ENCODE measurements at regions of chr18 and their contacts with region 1.

Region 1: GRCh38 chr18:22348521-22349316 is 69.0 kb downstream of the CTAGE1 start:
- DNase-seq: peak; percentile 73 to 85
- ATAC-seq: peak; percentile 77
- H3K4me3 ChIP-seq: peak overlapping the region; percentile 48 to 72
- H3K27ac ChIP-seq: peak overlapping the region; percentile 99
- H3K4me1 ChIP-seq: peaks cover 0 to 2% of the 10 kb centered on the region in 2 donors
- H3K27me3 ChIP-seq: no peaks in the 10 kb centered on the region

Region 2: DNA sequence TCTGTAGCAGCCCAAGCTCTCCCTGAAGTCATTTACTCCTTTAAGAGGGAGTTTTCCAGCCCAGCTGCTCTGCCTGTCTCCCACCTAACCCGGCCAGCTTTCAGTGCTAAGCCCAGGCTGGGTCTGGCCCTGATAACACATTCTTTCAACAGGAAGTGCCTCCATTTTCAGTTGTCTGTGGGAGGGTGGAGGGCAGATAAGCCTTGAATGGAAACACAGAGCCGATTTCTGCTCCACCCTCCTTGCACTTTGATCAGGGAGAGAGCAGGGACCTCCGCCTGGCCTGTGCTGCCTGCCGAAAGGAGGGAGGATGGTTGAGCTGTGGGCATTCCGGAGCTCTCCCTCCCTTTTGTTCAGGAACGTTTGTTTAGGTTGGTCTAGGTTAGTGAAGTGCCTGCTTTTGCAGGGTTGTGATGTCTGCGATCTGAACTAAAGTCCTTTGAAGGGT is 154.5 kb before region 1 on chr18:
- intact Hi-C with region 1: loop called (anchors 5 kb)
- DNase-seq: no peak
- ATAC-seq: no peak
- H3K4me3 ChIP-seq: no peak overlapping the region
- H3K27ac ChIP-seq: peak overlapping the region; percentile 62 to 72
- H3K4me1 ChIP-seq: peaks cover 4 to 11% of the 10 kb centered on the region in 2 donors
- H3K27me3 ChIP-seq: no peaks in the 10 kb centered on the region

Region 3: DNA sequence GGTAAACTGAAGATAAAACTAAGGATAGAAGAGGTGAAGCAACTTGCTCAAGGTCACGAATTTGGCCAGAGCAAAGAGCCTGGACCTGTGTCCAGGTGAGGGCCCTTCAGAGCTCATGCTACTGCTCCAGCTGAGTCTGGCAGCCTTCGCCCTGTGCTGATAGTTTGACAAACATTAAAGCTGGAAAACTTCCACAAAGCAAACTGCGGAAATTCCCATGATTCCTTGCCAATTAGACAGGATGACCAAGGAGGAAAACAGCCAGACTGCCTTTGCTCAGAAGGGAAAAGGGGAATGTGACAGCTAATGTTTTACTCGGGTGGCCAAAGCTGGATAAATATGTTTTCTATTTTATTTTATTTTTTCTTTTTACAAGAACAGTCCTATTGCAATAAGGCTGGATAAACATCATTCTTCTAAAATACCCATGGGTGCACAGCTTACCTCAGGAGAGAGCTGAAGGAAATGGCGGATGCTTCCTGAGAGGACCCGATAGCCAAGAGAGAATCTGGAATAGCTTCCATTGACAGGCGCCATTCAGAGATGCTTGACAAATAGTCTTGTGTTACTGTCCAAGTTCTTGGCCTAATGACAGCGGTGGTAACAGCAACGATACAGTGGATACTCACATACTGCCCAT is 74.3 kb after region 1 on chr18:
- intact Hi-C with region 1: loop called in 1 of 2 experiments (anchors 5 kb)
- DNase-seq: peak in 1 of 2 donors; percentile 64
- ATAC-seq: peak; percentile 17
- H3K4me3 ChIP-seq: no peak overlapping the region
- H3K27ac ChIP-seq: peak overlapping the region in 1 of 2 donors; percentile 89
- H3K4me1 ChIP-seq: peaks cover 0 to 7% of the 10 kb centered on the region in 2 donors
- H3K27me3 ChIP-seq: no peaks in the 10 kb centered on the region

Region 4: DNA sequence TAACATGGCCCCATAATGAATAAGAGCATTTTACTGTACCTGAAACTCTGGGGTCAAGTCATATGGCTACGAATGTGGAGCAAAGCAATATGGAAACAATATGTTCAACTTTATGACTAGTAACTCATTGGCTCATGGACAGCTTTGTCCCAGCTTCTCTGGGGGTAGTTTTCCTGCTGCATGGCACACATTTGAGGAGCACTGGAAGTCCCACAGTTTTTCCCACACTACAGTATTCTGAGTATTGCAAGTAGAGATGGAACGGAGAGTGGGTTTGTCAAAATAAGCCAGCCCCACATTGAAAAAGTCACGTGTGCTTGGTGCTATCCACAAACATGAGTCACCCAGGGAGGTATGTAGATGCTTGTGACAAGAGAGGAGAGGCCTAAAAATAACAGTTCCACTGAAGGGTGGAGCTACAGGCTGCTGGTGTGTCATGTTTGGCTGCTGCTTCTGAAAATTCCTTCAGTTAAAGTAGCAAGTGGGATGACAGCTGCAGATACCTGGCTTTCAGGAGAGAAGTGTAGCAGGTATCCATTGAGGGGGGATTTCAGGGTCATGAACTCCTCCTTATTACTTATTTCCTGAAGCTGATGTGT is 117.2 kb after region 1 on chr18:
- intact Hi-C with region 1: loop called (anchors 2 to 5 kb)
- DNase-seq: peak in 1 of 2 donors; percentile 65
- ATAC-seq: peak; percentile 89
- H3K4me3 ChIP-seq: no peak overlapping the region
- H3K27ac ChIP-seq: peak overlapping the region; percentile 72 to 100
- H3K4me1 ChIP-seq: peaks cover 4 to 8% of the 10 kb centered on the region in 2 donors
- H3K27me3 ChIP-seq: no peaks in the 10 kb centered on the region

Region 5: DNA sequence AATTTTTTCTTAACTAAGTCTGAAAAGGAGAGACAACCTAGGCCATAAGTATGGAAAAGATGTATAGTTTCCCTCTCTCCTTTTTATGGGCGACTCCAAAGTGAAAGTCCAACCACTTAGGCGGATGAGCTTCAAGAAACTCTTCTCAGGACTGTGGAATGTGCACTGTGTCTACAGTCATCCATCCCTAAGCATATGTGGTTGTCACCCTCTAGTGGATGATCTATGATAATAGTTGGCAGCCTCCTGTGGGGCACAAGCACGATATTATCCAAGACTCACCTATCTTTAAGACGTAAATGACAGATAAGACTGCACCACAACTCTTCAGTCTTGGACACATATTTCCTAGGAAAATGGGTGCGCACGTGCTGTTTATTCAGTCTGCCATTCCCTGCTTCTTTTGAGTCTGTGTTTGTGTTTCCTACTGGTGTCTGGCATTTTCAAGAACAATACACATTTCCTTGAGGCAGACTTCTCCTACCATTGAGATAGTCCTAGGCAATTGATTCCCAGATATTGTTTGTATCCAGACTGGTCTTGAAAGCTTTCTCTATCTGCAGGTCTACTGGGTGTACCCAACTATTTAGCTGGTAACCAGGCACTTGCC is 214.5 kb after region 1 on chr18:
- intact Hi-C with region 1: loop called (anchors 2 to 5 kb)
- DNase-seq: no peak
- ATAC-seq: peak; percentile 83
- H3K4me3 ChIP-seq: peak overlapping the region in 1 of 2 donors; percentile 21
- H3K27ac ChIP-seq: peak overlapping the region in 1 of 2 donors; percentile 25
- H3K4me1 ChIP-seq: peaks cover 0 to 5% of the 10 kb centered on the region in 2 donors
- H3K27me3 ChIP-seq: no peaks in the 10 kb centered on the region

Measured in aorta (tissue), 5 donors.